ENCODE measurements at regions of chr7 and their contacts with region 1.

Region 1: DNA sequence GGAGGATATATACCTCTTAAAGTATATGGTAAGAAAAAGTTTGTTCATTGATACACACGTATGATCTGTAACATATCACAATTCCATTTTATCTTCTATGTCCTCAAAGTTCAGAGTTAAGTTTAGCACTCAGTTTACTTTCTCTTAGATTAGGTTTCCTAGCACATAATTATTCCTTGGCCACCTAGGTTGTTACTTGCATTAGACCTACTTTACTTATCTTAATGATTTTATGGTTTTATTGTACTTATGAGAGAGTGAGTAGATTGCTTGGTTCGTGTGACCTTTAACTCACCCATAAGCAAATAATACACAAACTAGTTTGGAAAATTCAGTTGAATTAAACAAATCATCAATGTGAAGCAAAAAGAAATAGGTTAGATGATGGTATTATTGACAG is 33.9 kb upstream of the SP4 start:
- DNase-seq: no peak
- ATAC-seq: no peak
- H3K4me3 ChIP-seq: no peak overlapping the region
- H3K27ac ChIP-seq: no peak overlapping the region
- H3K4me1 ChIP-seq: no peaks in the 10 kb centered on the region
- H3K27me3 ChIP-seq: peaks cover 0 to 8% (median 0%) of the 10 kb centered on the region in 7 donors
- CTCF ChIP-seq: no peak

Region 2: DNA sequence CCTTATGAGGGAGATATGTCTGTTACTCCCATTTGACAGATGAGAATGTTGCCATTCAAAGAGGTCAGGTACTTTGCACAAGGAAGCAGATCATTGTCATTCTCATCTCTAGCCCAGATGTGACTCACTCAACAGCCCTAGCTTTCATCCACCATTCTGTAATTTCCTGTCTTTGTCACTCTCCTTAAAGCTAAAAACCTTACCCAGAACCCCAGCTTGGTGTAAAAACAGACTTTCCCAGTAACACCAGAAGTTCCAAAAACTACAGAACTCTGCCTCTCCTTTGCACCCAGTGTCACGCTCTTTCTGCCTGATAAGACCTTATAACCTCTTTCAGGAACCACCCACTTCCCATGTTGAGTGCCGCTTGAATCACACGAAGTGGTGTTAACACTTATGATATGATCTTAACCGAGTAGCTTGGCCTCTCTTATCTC is 55.2 kb before region 1 on chr7:
- intact Hi-C with region 1: no loop called
- DNase-seq: no peak
- ATAC-seq: no peak
- H3K4me3 ChIP-seq: no peak overlapping the region
- H3K27ac ChIP-seq: peak overlapping the region in 1 of 10 donors; percentile 60
- H3K4me1 ChIP-seq: peaks cover 0 to 9% (median 0%) of the 10 kb centered on the region in 9 donors
- H3K27me3 ChIP-seq: peaks cover 0 to 3% (median 0%) of the 10 kb centered on the region in 7 donors
- CTCF ChIP-seq: no peak

Region 3: GRCh38 chr7:21454182-21454581 is 60.2 kb after region 1 on chr7:
- intact Hi-C with region 1: no loop called
- DNase-seq: no peak
- ATAC-seq: no peak
- H3K4me3 ChIP-seq: no peak overlapping the region
- H3K27ac ChIP-seq: no peak overlapping the region
- H3K4me1 ChIP-seq: peaks cover 0 to 8% (median 5%) of the 10 kb centered on the region in 9 donors
- H3K27me3 ChIP-seq: no peaks in the 10 kb centered on the region
- CTCF ChIP-seq: no peak

Region 4: DNA sequence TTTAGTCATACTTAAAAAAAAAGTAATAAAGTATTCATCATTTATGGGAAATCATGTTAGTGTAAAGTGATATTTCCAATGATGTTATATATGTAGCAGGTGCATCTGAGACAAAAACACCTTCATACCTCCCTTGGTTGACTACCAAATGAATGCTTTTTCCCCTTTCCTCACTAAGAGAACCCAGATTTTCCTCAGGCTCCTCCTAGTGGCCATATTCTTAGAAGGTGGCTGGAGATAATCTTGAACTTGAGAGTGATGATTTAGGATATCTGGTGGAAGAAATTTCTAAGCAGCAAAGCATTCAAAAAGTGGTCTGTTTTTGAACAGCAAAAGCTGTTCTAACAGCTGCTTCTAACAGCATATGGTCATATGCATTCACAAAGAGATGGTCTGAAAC is 132.1 kb after region 1 on chr7:
- intact Hi-C with region 1: loop called in 1 of 10 experiments (anchors 10 kb)
- DNase-seq: no peak
- ATAC-seq: no peak
- H3K4me3 ChIP-seq: no peak overlapping the region
- H3K27ac ChIP-seq: no peak overlapping the region
- H3K4me1 ChIP-seq: no peaks in the 10 kb centered on the region
- H3K27me3 ChIP-seq: peaks cover 0 to 4% (median 0%) of the 10 kb centered on the region in 7 donors
- CTCF ChIP-seq: peak in 5 of 9 donors; percentile 29 to 47 (median 37)